ENCODE measurements at regions of chr2 and their contacts with region 1.

Region 1: DNA sequence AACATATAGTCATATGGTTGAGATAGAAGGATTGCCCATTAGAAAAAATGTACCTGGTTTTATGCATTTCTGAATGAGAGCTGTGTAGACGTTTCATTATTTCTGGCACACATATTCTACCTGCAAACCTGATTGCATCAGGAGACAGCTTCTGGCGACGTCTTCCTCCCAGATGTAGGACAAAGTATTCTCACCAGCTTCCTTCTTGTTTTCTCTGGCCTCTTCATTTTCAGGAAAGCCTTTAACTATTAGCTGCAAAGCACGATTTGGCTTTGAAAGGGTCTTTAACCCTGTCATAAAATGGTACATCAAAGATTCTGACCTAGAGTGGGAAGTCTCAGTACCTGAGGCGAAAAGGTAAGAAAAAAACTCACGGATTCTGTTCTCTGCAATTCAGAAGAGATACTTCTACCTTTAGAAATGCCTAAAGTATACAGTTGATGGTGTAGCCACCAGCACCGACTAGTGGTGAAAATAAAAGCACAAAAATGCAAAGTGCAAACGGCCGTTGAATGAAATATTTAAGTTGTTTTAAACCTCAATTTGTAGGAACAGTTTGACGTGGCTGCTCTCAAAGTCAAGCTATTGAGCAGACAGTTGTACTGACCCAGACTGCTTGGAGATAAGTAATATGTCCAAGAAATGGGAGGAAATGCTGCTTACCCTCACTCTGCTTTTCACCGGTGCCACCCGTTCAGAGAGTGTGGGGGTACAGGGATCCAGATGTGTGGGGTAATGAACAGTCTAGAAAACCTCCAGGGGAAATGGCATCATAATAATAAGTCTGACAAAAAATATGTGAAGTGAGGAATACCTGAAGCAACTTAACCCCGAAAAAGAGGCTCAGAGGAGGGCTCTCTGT is 20.2 kb downstream of the IL18RAP start:
- DNase-seq: peak; percentile 48
- H3K4me3 Mint-ChIP-seq: no peak overlapping the region
- H3K27ac Mint-ChIP-seq: no peak overlapping the region
- H3K4me1 Mint-ChIP-seq: peaks cover 12% of the 10 kb centered on the region
- H3K27me3 Mint-ChIP-seq: no peaks in the 10 kb centered on the region
- CTCF ChIP-seq: peak; percentile 84

Region 2: GRCh38 chr2:101341901-101342624 is 1101.1 kb before region 1 on chr2:
- CTCF ChIA-PET with region 1: interaction called, 3 read pairs
- POLR2A ChIA-PET with region 1: no interaction called
- intact Hi-C with region 1: loop called (anchors 10 kb)
- DNase-seq: peak; percentile 78
- H3K4me3 Mint-ChIP-seq: no peak overlapping the region
- H3K27ac Mint-ChIP-seq: no peak overlapping the region
- H3K4me1 Mint-ChIP-seq: peaks cover 5% of the 10 kb centered on the region
- H3K27me3 Mint-ChIP-seq: no peaks in the 10 kb centered on the region
- CTCF ChIP-seq: peak; percentile 78

Region 3: DNA sequence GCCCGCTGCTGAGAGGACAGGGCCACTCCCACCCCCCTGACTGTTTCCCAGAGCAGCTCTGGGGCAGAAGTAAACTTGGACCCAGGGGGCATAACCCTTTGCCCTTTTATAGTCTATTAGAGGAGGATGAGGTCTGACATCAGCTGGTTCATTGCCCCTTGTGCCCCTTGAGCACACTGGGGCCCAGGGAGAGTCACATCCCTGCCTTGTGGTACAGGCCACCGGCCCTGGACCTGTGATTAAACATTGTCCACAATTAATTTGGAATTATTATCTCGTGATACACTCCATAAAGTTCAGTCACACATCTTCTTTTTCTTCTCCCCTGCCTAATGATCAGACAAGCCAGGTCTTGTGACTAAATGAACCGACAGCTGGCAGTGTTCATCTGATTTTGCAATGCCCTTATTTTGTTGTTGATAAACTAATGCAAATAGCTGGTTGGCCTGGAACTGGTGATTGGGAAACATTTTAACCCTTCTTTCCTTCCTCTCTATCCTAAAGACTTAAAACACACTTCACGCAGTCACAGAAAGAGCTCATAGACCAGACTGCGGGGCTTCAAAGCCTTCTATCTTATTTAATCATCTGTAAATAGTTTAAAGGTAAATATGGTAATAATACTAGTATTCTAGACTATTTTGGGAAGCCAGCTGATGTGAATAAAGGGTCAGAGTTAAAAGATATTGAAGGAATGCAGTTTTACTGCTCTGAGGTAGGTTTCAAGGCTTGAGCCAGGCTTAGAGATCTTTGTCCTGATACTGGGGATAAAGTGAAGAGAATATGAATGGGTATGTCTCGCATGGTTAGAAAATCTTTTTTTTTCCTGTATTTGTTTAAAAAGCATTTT is 287.3 kb before region 1 on chr2:
- CTCF ChIA-PET with region 1: interaction called, 12 read pairs
- POLR2A ChIA-PET with region 1: interaction called, 3 read pairs
- intact Hi-C with region 1: no loop called
- DNase-seq: peak; percentile 62
- H3K4me3 Mint-ChIP-seq: no peak overlapping the region
- H3K27ac Mint-ChIP-seq: peak overlapping the region; percentile 94
- H3K4me1 Mint-ChIP-seq: peaks cover 30% of the 10 kb centered on the region
- H3K27me3 Mint-ChIP-seq: no peaks in the 10 kb centered on the region
- CTCF ChIP-seq: no peak

Region 4: GRCh38 chr2:102251042-102251848 is 192.0 kb before region 1 on chr2:
- CTCF ChIA-PET with region 1: interaction called, 31 read pairs
- POLR2A ChIA-PET with region 1: interaction called, 7 read pairs
- intact Hi-C with region 1: no loop called
- DNase-seq: no peak
- H3K4me3 Mint-ChIP-seq: no peak overlapping the region
- H3K27ac Mint-ChIP-seq: no peak overlapping the region
- H3K4me1 Mint-ChIP-seq: peaks cover 16% of the 10 kb centered on the region
- H3K27me3 Mint-ChIP-seq: no peaks in the 10 kb centered on the region
- CTCF ChIP-seq: no peak

Region 5: DNA sequence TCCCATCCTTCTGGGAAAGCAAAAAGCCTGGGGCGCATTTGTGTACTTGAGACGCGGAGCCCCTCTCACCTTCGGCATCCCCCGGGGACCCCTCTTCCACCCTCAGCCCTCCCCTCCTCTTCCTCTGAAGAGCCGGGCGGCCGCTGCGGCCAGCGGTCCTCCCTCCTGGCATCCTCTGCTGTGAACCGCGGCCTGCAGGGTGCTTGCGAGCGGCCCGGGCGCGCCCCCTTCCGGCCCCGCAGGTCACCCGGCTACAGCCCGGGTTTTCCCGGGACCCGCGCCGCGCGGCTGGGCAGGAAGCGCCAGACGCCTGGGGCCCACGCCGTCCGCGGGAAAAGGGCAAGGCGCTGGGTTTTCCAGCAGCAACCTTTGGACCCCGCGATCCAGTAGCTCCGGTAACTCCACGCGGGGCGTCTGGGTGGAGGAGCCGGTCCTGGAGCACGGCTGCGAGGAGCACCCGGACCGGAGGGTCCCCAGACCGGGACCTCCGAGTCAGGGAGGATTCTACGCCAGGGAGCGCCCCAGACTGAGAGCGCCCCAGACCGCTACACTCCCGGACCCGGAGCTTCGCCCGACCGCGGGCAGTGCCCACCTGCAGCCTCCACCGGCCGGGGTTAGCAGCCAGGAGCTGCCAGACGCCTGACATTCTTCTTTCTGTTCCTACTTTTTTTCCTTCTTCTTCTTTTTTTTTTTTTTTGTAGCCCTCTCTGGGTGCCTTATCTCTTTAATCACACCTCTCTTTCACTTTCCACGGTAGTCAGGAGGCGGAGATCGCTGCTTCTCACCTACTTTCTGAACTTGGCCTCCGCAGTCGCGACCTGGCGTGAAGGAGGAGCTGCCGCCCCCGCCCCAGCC is 87.4 kb before region 1 on chr2 and contains the start of gene IL18R1:
- CTCF ChIA-PET with region 1: interaction called, 27 read pairs
- POLR2A ChIA-PET with region 1: interaction called, 5 read pairs
- intact Hi-C with region 1: loop called (anchors 1 kb)
- DNase-seq: peak; percentile 71
- H3K4me3 Mint-ChIP-seq: peak within 1 kb of the TSS; percentile 87
- H3K27ac Mint-ChIP-seq: peak within 1 kb of the TSS; percentile 68
- H3K4me1 Mint-ChIP-seq: peaks cover 19% of the 10 kb centered on the region
- H3K27me3 Mint-ChIP-seq: no peaks in the 10 kb centered on the region
- CTCF ChIP-seq: peak; percentile 85
- total RNA-seq, gene IL18R1: 3.5 and 6.7 TPM in 2 replicates

Region 6: GRCh38 chr2:102432386-102432785 is 10.8 kb before region 1 on chr2:
- CTCF ChIA-PET with region 1: interaction called, 20 read pairs
- POLR2A ChIA-PET with region 1: no interaction called
- intact Hi-C with region 1: no loop called
- DNase-seq: no peak
- H3K4me3 Mint-ChIP-seq: no peak overlapping the region
- H3K27ac Mint-ChIP-seq: no peak overlapping the region
- H3K4me1 Mint-ChIP-seq: no peaks in the 10 kb centered on the region
- H3K27me3 Mint-ChIP-seq: no peaks in the 10 kb centered on the region
- CTCF ChIP-seq: no peak

Region 7: DNA sequence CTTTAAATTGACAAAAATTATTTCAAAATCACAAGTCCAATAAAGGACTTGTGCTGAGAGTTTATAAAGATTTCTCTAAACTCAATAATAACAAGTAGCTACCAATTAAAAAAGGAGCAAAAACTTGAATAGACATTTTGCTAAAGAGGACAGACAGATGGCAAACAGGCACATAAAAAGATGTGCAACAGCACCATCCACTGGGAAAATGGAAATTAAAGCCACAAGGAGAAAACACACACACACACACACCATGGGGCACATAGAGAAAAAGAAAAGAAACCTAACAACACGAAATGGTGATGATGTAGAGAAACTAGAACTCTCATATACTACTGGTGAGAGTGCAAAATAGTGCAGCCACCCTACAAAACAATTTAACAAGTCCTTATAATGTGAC is 17.3 kb after region 1 on chr2:
- CTCF ChIA-PET with region 1: interaction called, 14 read pairs
- POLR2A ChIA-PET with region 1: no interaction called
- intact Hi-C with region 1: no loop called
- DNase-seq: peak; percentile 10
- H3K4me3 Mint-ChIP-seq: no peak overlapping the region
- H3K27ac Mint-ChIP-seq: no peak overlapping the region
- H3K4me1 Mint-ChIP-seq: no peaks in the 10 kb centered on the region
- H3K27me3 Mint-ChIP-seq: peaks cover 54% of the 10 kb centered on the region
- CTCF ChIP-seq: no peak